Activated CD4-positive, alpha-beta T cell treated with anti-CD3 and anti-CD28 coated beads for 36 hours (primary cell): ENCODE measurements at regions of chr11 and their contacts with region 1.

Region 1: GRCh38 chr11:124194698-124195410 is 11.7 kb downstream of the OR10D3 start:
- DNase-seq: peak; percentile 71
- ATAC-seq: peak; percentile 90
- H3K4me3 Mint-ChIP-seq: no peak overlapping the region
- H3K27ac Mint-ChIP-seq: no peak overlapping the region
- H3K4me1 Mint-ChIP-seq: no peaks in the 10 kb centered on the region
- H3K27me3 Mint-ChIP-seq: peaks cover 17% of the 10 kb centered on the region

Region 2: DNA sequence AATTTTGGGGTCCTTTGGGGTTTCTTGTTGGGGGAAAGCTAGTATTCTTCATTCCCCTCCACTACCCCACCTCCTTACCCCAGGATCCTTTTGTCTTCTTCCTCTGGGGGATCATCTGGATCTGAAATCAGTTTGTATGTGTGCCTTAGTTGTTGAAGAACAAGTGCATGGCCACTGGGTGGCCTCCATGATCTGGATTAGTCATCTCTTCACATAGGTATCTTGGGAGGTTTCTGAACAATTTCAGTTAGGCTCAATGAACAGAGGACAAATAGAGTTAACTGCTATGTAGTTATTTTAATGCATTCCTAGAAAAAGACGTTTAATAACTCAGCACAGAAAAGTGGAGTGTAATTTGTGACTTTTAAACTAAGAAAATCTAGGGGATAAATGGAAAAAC is 86.7 kb before region 1 on chr11:
- CTCF ChIA-PET with region 1: interaction called, 5 read pairs
- POLR2A ChIA-PET with region 1: no interaction called
- intact Hi-C with region 1: loop called (anchors 1 to 2 kb)
- DNase-seq: peak; percentile 43
- ATAC-seq: peak; percentile 65
- H3K4me3 Mint-ChIP-seq: no peak overlapping the region
- H3K27ac Mint-ChIP-seq: no peak overlapping the region
- H3K4me1 Mint-ChIP-seq: no peaks in the 10 kb centered on the region
- H3K27me3 Mint-ChIP-seq: peaks cover 20% of the 10 kb centered on the region